Heart left ventricle (tissue), 16 donors: ENCODE measurements at regions of chr7 and their contacts with region 1.

Region 1: DNA sequence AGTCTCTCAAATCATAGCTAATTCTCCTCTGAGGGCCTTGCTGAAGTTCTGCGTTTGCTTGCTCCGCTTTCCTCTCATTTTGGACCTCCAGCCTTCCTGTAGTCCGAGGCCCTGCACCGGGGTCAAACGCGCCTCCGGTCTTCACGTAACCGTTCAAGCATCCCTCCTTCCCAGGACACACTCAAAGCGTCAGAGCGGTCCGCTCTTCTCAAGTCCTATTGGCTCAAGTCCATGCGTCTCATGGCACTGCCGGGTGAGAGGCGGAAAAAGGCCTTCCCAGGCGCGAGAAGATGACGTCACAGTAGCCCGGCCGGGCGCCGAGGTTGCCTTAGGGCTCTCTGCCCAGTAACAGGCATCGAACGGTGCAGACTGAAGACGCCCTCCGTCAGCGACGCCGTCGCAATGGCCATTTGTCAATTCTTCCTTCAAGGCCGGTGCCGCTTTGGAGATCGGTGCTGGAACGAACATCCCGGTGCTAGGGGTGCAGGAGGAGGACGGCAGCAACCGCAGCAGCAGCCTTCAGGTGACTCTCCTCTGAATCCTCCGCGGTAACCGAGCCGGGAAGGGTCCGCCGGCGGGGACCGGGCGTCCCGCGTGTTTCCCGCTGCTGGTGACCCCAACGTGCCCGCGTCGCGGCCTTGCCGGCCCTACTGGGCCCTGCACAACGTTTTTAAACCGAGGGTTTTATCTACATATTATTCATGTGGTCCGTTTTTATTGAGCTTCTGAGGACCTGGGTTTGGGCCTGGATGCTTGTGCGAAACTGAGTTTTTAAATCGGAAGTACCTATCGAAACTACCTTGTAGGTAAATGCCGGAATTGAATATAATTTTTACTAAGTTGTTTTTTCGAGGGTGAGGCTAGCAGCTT is at the start of gene NUP42:
- DNase-seq: peak; percentile 95 to 97 (median 96)
- ATAC-seq: peak; percentile 95 to 97 (median 97)
- H3K4me3 ChIP-seq: peak within 1 kb of the TSS; percentile 76 to 98 (median 88)
- H3K27ac ChIP-seq: peak within 1 kb of the TSS; percentile 87 to 97 (median 94)
- H3K4me1 ChIP-seq: peaks cover 4 to 42% (median 26%) of the 10 kb centered on the region in 12 donors
- H3K27me3 ChIP-seq: no peaks in the 10 kb centered on the region
- CTCF ChIP-seq: no peak
- POLR2A ChIP-seq: peak in 1 of 2 donors; percentile 68
- total RNA-seq, gene NUP42: 12.7 to 24.7 (median 18.9) TPM

Region 2: GRCh38 chr7:23105644-23106056 is 76.3 kb before region 1 on chr7 and contains the start of gene KLHL7:
- intact Hi-C with region 1: loop called (anchors 1 to 10 kb)
- DNase-seq: peak; percentile 96 to 99 (median 97)
- ATAC-seq: peak; percentile 97 to 99 (median 98)
- H3K4me3 ChIP-seq: peak within 1 kb of the TSS; percentile 70 to 100 (median 90)
- H3K27ac ChIP-seq: peak within 1 kb of the TSS; percentile 89 to 97 (median 92)
- H3K4me1 ChIP-seq: peaks cover 0 to 44% (median 25%) of the 10 kb centered on the region in 12 donors
- H3K27me3 ChIP-seq: no peaks in the 10 kb centered on the region
- CTCF ChIP-seq: no peak
- POLR2A ChIP-seq: peak; percentile 56 to 97
- total RNA-seq, gene KLHL7: 63.4 to 159 (median 120) TPM

Region 3: GRCh38 chr7:23254051-23254681 is 72.2 kb after region 1 on chr7:
- intact Hi-C with region 1: loop called in 5 of 10 experiments (anchors 5 kb)
- DNase-seq: no peak
- ATAC-seq: no peak
- H3K4me3 ChIP-seq: no peak overlapping the region
- H3K27ac ChIP-seq: no peak overlapping the region
- H3K4me1 ChIP-seq: peaks cover 0 to 5% (median 0%) of the 10 kb centered on the region in 12 donors
- H3K27me3 ChIP-seq: no peaks in the 10 kb centered on the region
- CTCF ChIP-seq: no peak
- POLR2A ChIP-seq: no peak

Region 4: DNA sequence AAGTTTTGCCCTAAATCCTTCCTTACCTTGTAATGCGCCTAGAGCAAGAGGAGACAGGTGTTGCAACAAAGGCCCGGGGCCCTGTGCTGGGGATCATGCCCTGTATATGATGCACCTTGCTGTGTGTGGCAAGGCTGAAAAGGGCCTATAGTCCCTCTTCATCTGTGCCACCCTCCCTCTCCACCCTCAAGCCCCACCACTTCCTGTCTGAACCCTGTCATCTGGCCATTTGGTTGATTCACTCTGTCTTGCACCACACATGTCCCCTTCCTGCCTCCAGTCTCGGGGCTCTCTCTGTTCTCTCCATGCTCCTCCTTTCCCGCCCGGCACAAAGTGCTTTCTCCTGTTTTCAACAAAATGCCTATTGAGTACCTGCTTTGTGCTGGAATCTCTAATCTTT is 105.7 kb after region 1 on chr7:
- intact Hi-C with region 1: no loop called
- DNase-seq: no peak
- ATAC-seq: no peak
- H3K4me3 ChIP-seq: no peak overlapping the region
- H3K27ac ChIP-seq: no peak overlapping the region
- H3K4me1 ChIP-seq: no peaks in the 10 kb centered on the region
- H3K27me3 ChIP-seq: peaks cover 0 to 3% (median 0%) of the 10 kb centered on the region in 9 donors
- CTCF ChIP-seq: no peak
- POLR2A ChIP-seq: no peak

Region 5: GRCh38 chr7:23474094-23474828 is 292.3 kb after region 1 on chr7:
- intact Hi-C with region 1: loop called in 1 of 10 experiments (anchors 10 kb)
- DNase-seq: peak in 4 of 5 donors; percentile 54 to 86 (median 73)
- ATAC-seq: peak in 3 of 4 donors; percentile 73 to 85 (median 85)
- H3K4me3 ChIP-seq: peak overlapping the region in 10 of 12 donors; percentile 9 to 54 (median 21)
- H3K27ac ChIP-seq: no peak overlapping the region
- H3K4me1 ChIP-seq: peaks cover 4 to 42% (median 22%) of the 10 kb centered on the region in 12 donors
- H3K27me3 ChIP-seq: peaks cover 82 to 100% (median 99%) of the 10 kb centered on the region in 9 donors
- CTCF ChIP-seq: no peak
- POLR2A ChIP-seq: no peak

Region 6: GRCh38 chr7:23597094-23598091 is 415.5 kb after region 1 on chr7 and contains the start of gene CCDC126:
- intact Hi-C with region 1: loop called in 1 of 10 experiments (anchors 5 kb)
- DNase-seq: peak; percentile 93 to 97 (median 96)
- ATAC-seq: peak; percentile 98 to 99 (median 99)
- H3K4me3 ChIP-seq: peak within 1 kb of the TSS; percentile 59 to 98 (median 76)
- H3K27ac ChIP-seq: peak within 1 kb of the TSS; percentile 87 to 99 (median 96)
- H3K4me1 ChIP-seq: peaks cover 0 to 19% (median 13%) of the 10 kb centered on the region in 12 donors
- H3K27me3 ChIP-seq: no peaks in the 10 kb centered on the region
- CTCF ChIP-seq: peak in 1 of 12 donors; percentile 6
- POLR2A ChIP-seq: peak in 1 of 2 donors; percentile 53
- total RNA-seq, gene CCDC126: 4.7 to 13.7 (median 9.9) TPM